OCI-LY7 (cell line): ENCODE measurements at regions of chr19 and their contacts with region 1.

Region 1: DNA sequence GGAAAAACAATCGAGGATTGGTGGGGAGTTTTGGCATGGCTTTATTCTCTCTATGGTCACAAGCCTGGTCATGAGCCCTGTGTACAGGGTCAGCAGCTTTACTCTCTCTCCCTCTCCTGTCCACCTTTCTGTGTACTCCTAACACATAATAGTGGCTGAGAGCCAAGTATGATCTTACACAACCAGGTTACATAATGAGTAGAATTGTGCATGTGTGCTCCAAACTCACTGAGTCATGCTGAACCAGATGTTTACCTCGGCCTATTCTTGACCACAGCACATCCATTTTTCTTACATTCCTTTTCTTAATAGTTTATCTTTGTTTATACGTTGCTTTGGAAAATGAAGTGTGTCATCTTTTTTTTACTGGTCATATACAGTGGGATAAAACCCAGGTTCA is 53.1 kb downstream of the ZNF254 start:
- DNase-seq: no peak
- H3K4me3 ChIP-seq: no peak overlapping the region
- H3K27ac ChIP-seq: no peak overlapping the region
- H3K4me1 ChIP-seq: no peaks in the 10 kb centered on the region
- CTCF ChIP-seq: no peak

Region 2: GRCh38 chr19:22609630-22610029 is 1530.5 kb before region 1 on chr19:
- CTCF ChIA-PET with region 1: no interaction called
- POLR2A ChIA-PET with region 1: interaction called, 10 read pairs
- intact Hi-C with region 1: no loop called
- DNase-seq: no peak
- H3K4me3 ChIP-seq: no peak overlapping the region
- H3K27ac ChIP-seq: no peak overlapping the region
- H3K4me1 ChIP-seq: no peaks in the 10 kb centered on the region
- CTCF ChIP-seq: no peak

Region 3: GRCh38 chr19:24178207-24178606 is 38.1 kb after region 1 on chr19:
- CTCF ChIA-PET with region 1: no interaction called
- POLR2A ChIA-PET with region 1: no interaction called
- intact Hi-C with region 1: no loop called
- DNase-seq: no peak
- H3K4me3 ChIP-seq: no peak overlapping the region
- H3K27ac ChIP-seq: no peak overlapping the region
- H3K4me1 ChIP-seq: no peaks in the 10 kb centered on the region
- CTCF ChIP-seq: no peak